ENCODE measurements at regions of chr2 and their contacts with region 1.

Region 1: DNA sequence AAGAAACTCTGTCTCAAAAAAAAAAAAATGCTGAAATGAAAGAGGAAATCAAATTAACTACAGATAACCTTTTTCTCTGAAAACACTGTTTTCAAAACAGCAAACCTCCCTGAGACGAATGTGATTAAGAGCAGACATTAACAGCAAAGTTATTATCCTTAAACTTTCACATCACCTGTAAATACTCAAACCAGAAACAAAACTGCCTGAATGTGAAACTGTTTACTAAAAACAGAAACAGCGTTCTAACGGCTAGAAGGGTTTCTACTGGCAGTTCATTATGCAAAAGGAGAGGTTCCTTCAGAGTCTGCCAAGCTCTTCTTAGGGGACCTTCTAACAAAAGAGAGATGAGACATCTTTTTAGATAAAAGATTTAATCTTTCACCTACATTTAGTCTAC is 45.9 kb downstream of the PNO1 start:
- DNase-seq: no peak
- H3K4me3 Mint-ChIP-seq: peak overlapping the region; percentile 67
- H3K27ac Mint-ChIP-seq: peak overlapping the region; percentile 90
- H3K4me1 Mint-ChIP-seq: peaks cover 67% of the 10 kb centered on the region
- H3K27me3 Mint-ChIP-seq: no peaks in the 10 kb centered on the region

Region 2: GRCh38 chr2:68157402-68158133 is 46.0 kb before region 1 on chr2 and contains the start of gene PNO1:
- intact Hi-C with region 1: loop called (anchors 5 kb)
- DNase-seq: peak; percentile 96
- H3K4me3 Mint-ChIP-seq: peak within 1 kb of the TSS; percentile 90
- H3K27ac Mint-ChIP-seq: peak within 1 kb of the TSS; percentile 100
- H3K4me1 Mint-ChIP-seq: peaks cover 37% of the 10 kb centered on the region
- H3K27me3 Mint-ChIP-seq: no peaks in the 10 kb centered on the region
- total RNA-seq, gene PNO1: 31.3 and 33.4 TPM in 2 replicates

Region 3: DNA sequence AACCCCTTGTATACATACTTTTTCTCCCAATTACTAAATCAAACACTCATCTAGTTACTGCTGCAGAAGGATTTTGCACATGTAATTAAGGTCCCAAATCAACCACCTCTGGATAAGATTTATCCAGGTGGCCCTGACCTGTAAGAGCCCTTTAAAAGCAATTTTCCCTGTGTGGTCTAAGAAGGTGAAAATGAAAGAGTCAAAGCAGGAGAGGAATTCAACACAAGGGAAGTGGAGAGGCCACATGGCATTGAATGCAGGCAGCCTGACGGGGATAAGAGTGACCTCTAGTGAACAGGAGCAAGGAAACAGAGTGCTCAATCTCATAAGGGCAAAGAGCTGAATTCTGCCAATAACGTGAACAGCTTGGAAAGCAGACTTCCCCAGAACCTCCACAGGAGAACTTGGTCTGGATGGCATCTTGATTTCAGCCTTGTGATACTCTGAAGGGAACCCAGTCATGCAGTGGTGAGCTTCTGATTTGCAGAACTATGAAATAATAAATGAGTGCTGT is 21.6 kb after region 1 on chr2:
- intact Hi-C with region 1: loop called (anchors 2 kb)
- DNase-seq: no peak
- H3K4me3 Mint-ChIP-seq: no peak overlapping the region
- H3K27ac Mint-ChIP-seq: peak overlapping the region; percentile 20
- H3K4me1 Mint-ChIP-seq: peaks cover 68% of the 10 kb centered on the region
- H3K27me3 Mint-ChIP-seq: no peaks in the 10 kb centered on the region

Region 4: DNA sequence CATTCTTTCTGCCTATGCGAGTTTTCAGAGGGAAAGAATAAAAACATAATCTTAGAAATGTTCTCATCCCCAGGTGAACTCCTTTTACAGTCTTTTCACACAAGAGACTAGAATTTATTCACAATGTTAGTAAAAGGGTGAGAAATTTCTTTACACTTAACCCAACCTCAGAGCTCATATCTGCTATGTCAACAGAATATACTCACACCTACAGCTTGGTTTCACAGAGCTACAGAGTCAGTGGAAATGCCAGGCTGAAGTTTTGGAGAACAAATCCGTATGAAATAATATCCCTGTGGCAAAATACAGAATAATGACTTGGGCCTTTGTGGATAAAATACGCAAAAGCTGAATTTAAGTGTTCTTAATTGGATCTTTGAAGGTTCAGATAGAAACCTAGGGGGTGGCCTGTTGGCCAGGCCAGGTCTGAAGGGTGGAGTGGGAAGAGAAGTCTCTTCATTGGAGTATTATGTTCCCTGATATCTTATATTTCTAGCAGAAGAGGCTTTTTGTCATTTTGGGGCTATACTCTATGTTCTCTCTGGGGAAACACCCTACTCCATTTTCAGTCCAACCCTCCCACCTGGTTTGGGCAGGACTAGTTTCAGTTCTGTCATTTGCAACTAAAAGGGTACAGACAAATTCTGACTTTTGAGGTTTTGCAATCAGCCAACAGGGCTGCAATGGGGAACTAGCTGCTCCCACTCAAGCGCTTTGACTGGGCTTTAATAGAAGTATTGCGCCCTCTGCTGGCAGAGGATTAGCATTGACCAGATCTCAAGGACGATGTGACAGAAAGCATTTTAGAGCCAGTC is 237.8 kb after region 1 on chr2:
- intact Hi-C with region 1: loop called (anchors 2 kb)
- DNase-seq: peak; percentile 76
- H3K4me3 Mint-ChIP-seq: peak overlapping the region; percentile 55
- H3K27ac Mint-ChIP-seq: peak overlapping the region; percentile 88
- H3K4me1 Mint-ChIP-seq: peaks cover 31% of the 10 kb centered on the region
- H3K27me3 Mint-ChIP-seq: peaks cover 10% of the 10 kb centered on the region

Measured in activated T-helper 1 cell treated with anti-CD3 and anti-CD28 coated beads, Interleukin-12 subunit alpha, Interleukin-12 subunit beta, Interleukin-2, Interleukin-4 antibody, amounts not matched to agents 30 ng/mL and 10 ng/mL and 1 ng/mL, durations not matched to agents 14 hours and 24 hours and 36 hours (primary cell).